Activated naive CD4-positive, alpha-beta T cell treated with anti-CD3 and anti-CD28 coated beads for 36 hours (primary cell): ENCODE measurements at regions of chr6 and their contacts with region 1.

Region 1: DNA sequence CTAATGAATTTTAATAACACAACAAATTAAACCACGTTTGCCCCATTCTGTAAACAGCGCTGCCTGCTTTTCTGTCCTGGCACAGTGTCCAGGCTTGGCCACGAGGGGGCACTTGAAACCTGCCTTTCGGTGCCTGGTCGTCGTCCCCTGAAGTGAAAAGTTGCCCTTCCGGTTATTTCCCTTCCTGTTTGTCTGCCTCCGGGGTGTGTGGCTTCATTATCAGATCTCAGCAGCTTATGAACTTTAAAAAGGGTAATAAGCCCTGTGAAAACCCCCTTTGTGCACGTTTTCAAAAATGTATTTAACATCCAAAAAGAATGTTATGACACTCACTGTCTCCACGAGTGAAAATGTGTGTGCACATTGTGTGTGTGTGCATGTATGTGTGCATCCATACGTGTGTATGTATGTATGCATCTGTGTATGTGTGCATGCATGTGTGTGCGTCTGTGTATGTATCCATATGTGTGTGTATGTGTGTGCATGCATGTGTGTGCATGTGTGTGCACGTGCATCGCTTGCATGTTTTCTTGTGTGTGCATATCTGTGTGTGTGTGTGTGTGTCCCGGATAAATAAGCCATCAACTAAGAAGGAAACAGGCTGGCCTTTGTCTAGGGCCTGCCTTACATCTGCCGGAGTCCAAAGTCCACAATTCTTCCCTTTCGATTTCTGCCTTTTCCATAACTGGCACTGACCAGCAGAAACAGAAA is 358.4 kb downstream of the THBS2 start:
- DNase-seq: peak; percentile 89
- H3K4me3 Mint-ChIP-seq: no peak overlapping the region
- H3K27ac Mint-ChIP-seq: no peak overlapping the region
- H3K4me1 Mint-ChIP-seq: peaks cover 14% of the 10 kb centered on the region
- H3K27me3 Mint-ChIP-seq: no peaks in the 10 kb centered on the region

Region 2: GRCh38 chr6:168941036-168941435 is 45.8 kb after region 1 on chr6:
- CTCF ChIA-PET with region 1: no interaction called
- intact Hi-C with region 1: no loop called
- DNase-seq: no peak
- H3K4me3 Mint-ChIP-seq: no peak overlapping the region
- H3K27ac Mint-ChIP-seq: no peak overlapping the region
- H3K4me1 Mint-ChIP-seq: no peaks in the 10 kb centered on the region
- H3K27me3 Mint-ChIP-seq: peaks cover 22% of the 10 kb centered on the region

Region 3: DNA sequence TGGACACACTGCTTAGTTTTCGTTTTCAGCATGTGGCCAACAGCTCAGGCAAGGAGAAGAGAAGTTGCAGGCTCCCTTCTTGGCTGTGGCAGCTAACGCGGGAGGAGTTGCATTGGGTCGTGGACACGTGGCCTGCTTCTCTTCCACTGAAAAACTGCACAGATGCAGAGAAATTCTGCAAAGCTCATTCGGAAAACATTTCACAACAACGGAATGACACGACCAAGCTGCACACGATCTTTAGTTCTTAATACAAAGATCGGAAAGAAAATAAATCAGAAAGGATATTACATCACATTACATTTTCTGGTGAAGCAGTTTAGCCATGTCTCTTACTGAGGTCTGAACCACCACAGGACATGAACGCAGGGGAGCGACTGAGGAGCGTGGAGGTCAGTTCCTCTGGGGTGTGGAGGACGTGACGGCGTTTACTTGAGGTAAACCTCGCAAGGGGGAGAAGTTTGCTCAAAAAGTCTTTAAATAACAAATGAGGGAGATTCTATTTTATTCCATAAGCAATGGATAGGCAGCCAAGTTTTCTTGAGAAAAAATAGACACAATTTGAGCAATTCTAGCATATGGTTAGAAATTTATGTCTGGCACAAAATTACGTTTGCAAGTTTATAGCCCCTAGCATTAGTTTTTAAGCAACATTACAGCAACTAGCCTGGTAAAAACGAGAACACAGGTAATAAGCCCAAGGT is 180.1 kb after region 1 on chr6:
- CTCF ChIA-PET with region 1: no interaction called
- intact Hi-C with region 1: no loop called
- DNase-seq: no peak
- H3K4me3 Mint-ChIP-seq: no peak overlapping the region
- H3K27ac Mint-ChIP-seq: no peak overlapping the region
- H3K4me1 Mint-ChIP-seq: no peaks in the 10 kb centered on the region
- H3K27me3 Mint-ChIP-seq: peaks cover 4% of the 10 kb centered on the region

Region 4: GRCh38 chr6:169224185-169224695 is 329.0 kb after region 1 on chr6:
- CTCF ChIA-PET with region 1: no interaction called
- intact Hi-C with region 1: no loop called
- DNase-seq: no peak
- H3K4me3 Mint-ChIP-seq: no peak overlapping the region
- H3K27ac Mint-ChIP-seq: no peak overlapping the region
- H3K4me1 Mint-ChIP-seq: no peaks in the 10 kb centered on the region
- H3K27me3 Mint-ChIP-seq: peaks cover 5% of the 10 kb centered on the region

Region 5: GRCh38 chr6:169371344-169372127 is 476.3 kb after region 1 on chr6:
- CTCF ChIA-PET with region 1: no interaction called
- intact Hi-C with region 1: loop called (anchors 5 kb)
- DNase-seq: no peak
- H3K4me3 Mint-ChIP-seq: no peak overlapping the region
- H3K27ac Mint-ChIP-seq: no peak overlapping the region
- H3K4me1 Mint-ChIP-seq: no peaks in the 10 kb centered on the region
- H3K27me3 Mint-ChIP-seq: no peaks in the 10 kb centered on the region

Region 6: GRCh38 chr6:169654598-169655391 is 759.5 kb after region 1 on chr6:
- CTCF ChIA-PET with region 1: no interaction called
- intact Hi-C with region 1: loop called (anchors 10 kb)
- DNase-seq: peak; percentile 68
- H3K4me3 Mint-ChIP-seq: peak overlapping the region; percentile 79
- H3K27ac Mint-ChIP-seq: peak overlapping the region; percentile 25
- H3K4me1 Mint-ChIP-seq: peaks cover 3% of the 10 kb centered on the region
- H3K27me3 Mint-ChIP-seq: no peaks in the 10 kb centered on the region

Region 7: DNA sequence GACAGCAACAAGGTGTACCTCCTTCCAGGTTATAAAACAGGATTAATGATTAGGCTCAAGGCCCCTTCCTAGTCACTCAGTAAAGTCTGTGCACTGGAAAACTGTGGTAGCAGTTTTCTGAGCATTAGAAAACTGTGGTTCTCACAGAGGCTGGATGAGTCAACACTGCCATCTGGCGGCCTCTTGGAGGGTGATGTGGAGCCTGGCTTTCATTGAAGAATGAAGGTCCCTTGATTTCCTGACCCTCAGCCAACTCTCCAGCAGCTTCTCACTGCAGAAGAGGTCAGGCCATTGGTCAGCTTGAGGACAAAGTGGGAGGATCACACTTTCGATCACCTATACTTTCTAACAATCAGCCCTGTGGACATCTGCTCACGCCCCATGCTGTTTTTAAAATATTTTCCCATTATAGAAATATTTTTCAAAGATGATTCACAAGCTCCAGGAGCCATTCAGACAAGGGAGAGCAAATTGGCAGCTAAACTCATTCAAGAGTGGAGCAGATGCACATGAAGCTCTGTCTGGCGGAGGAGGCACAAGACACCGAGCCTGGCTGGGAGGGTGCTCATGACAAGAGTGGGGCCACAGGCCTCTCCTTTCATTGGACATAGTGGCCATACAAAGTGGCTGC is 1634.7 kb after region 1 on chr6:
- CTCF ChIA-PET with region 1: no interaction called
- intact Hi-C with region 1: loop called (anchors 1 kb)
- DNase-seq: peak; percentile 84
- H3K4me3 Mint-ChIP-seq: no peak overlapping the region
- H3K27ac Mint-ChIP-seq: no peak overlapping the region
- H3K4me1 Mint-ChIP-seq: no peaks in the 10 kb centered on the region
- H3K27me3 Mint-ChIP-seq: no peaks in the 10 kb centered on the region